ENCODE measurements at regions of chr15 and their contacts with region 1.

Region 1: DNA sequence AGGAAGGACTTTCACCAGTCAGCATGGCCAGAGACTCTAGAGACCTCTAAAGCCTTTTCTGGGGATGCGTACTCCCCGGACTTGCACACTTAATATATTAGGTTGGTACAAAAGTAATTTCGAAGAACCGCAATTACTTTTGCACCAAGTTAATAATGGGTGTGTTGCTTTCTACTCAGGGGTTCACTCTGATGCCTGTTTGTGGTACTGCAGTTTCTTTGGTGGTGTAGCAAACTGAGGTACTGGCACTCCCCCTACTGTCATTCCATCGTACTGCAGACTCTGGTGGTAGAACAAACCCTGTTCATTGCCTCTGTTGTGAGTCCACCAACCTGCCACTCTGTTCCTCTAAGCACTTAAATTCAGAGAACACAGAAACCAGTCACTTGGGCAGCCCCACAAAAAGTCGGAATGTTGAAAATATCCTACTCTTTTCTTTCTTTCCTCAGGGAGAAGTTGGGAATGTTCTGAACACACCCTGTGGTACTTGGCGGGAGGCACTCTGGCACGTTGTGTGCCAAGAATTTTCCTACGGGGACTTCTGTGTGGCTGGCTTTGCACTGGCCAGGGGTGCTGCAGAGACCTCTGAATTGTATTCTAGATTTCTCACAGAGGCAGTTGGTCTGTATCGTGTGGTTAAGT is 46.3 kb downstream of the GABRG3 start:
- DNase-seq: no peak
- H3K4me3 ChIP-seq: no peak overlapping the region
- H3K27ac ChIP-seq: no peak overlapping the region
- H3K4me1 ChIP-seq: no peaks in the 10 kb centered on the region
- H3K27me3 ChIP-seq: peaks cover 0 to 3% (median 0%) of the 10 kb centered on the region in 4 donors
- CTCF ChIP-seq: peak in 2 of 3 experiments; percentile 14 to 54
- EP300 ChIP-seq: no peak
- POLR2A ChIP-seq: no peak

Region 2: GRCh38 chr15:26891448-26892181 is 125.7 kb before region 1 on chr15:
- intact Hi-C with region 1: loop called (anchors 2 kb)
- DNase-seq: peak; percentile 91
- H3K4me3 ChIP-seq: peak overlapping the region; percentile 9 to 46 (median 24)
- H3K27ac ChIP-seq: no peak overlapping the region
- H3K4me1 ChIP-seq: peaks cover 0 to 37% (median 20%) of the 10 kb centered on the region in 4 donors
- H3K27me3 ChIP-seq: peaks cover 0 to 9% (median 0%) of the 10 kb centered on the region in 4 donors
- CTCF ChIP-seq: peak; percentile 48 to 66 (median 61)
- EP300 ChIP-seq: no peak
- POLR2A ChIP-seq: no peak